Vagina (tissue), 2 donors: ENCODE measurements at regions of chr3 and their contacts with region 1.

Region 1: GRCh38 chr3:187164885-187165543 is 25.7 kb upstream of the RPL39L start:
- DNase-seq: no peak
- H3K4me3 ChIP-seq: no peak overlapping the region
- H3K27ac ChIP-seq: no peak overlapping the region
- H3K4me1 ChIP-seq: peaks cover 6% of the 10 kb centered on the region
- H3K27me3 ChIP-seq: no peaks in the 10 kb centered on the region
- CTCF ChIP-seq: peak; percentile 56 to 62 (median 58)
- POLR2A ChIP-seq: no peak

Region 2: GRCh38 chr3:186849374-186849975 is 315.5 kb before region 1 on chr3:
- intact Hi-C with region 1: loop called (anchors 10 kb)
- DNase-seq: no peak
- H3K4me3 ChIP-seq: no peak overlapping the region
- H3K27ac ChIP-seq: no peak overlapping the region
- H3K4me1 ChIP-seq: no peaks in the 10 kb centered on the region
- H3K27me3 ChIP-seq: no peaks in the 10 kb centered on the region
- CTCF ChIP-seq: no peak
- POLR2A ChIP-seq: no peak

Region 3: GRCh38 chr3:187082758-187083375 is 82.1 kb before region 1 on chr3:
- intact Hi-C with region 1: no loop called
- DNase-seq: no peak
- H3K4me3 ChIP-seq: no peak overlapping the region
- H3K27ac ChIP-seq: no peak overlapping the region
- H3K4me1 ChIP-seq: no peaks in the 10 kb centered on the region
- H3K27me3 ChIP-seq: no peaks in the 10 kb centered on the region
- CTCF ChIP-seq: no peak
- POLR2A ChIP-seq: no peak